Psoas muscle (tissue), 8 donors: ENCODE measurements at regions of chr1 and their contacts with region 1.

Region 1: GRCh38 chr1:160997323-160998038 is 23.5 kb downstream of the F11R start:
- DNase-seq: peak; percentile 33 to 67
- ATAC-seq: peak in 3 of 4 donors; percentile 60 to 76 (median 65)
- H3K4me3 ChIP-seq: no peak overlapping the region
- H3K27ac ChIP-seq: no peak overlapping the region
- H3K4me1 ChIP-seq: no peaks in the 10 kb centered on the region
- H3K27me3 ChIP-seq: no peaks in the 10 kb centered on the region
- CTCF ChIP-seq: peak; percentile 52

Region 2: DNA sequence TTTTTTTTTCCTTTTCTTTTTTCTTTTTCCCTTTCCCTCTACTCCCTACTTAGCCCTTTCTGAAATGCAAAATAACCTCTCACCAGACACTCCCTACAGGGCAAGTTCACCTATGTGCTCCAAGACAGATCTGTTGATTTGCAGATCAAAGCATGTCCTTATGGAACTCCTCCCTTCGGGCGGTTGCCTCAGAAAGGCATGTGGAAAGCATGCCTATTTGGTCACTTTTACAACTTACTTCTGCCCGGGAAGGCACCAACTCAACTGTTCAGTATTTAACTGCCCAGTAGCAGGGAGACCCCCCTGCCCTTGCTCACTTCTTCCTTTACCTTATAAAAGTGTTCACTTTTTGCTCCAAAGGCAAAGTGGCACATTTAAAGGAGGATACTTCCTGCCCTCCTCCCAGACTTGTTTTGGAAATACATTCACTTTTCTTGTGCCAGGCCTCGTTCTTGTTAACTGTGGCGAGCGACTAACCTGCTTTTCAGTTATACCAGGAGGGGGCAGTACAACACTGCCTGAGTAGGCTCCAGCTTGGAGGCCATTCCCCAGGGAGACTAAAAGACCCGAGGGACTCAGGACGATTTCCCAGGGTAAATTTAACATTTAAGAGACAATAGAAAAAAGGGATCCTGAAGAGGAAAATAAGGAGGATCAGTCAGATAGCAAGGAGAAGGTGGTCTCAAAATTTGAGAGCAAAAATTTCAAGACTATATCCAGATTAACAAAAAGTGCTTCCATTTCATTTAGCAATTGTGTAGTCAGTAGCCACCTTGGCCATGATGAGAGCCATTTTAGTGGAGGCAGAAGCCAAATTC is 270.8 kb before region 1 on chr1:
- intact Hi-C with region 1: loop called in 1 of 2 experiments (anchors 5 kb)
- DNase-seq: no peak
- ATAC-seq: no peak
- H3K4me3 ChIP-seq: no peak overlapping the region
- H3K27ac ChIP-seq: no peak overlapping the region
- H3K4me1 ChIP-seq: no peaks in the 10 kb centered on the region
- H3K27me3 ChIP-seq: no peaks in the 10 kb centered on the region
- CTCF ChIP-seq: peak; percentile 54

Region 3: GRCh38 chr1:161013488-161014230 is 16.2 kb after region 1 on chr1:
- intact Hi-C with region 1: no loop called
- DNase-seq: peak; percentile 71 to 80
- ATAC-seq: peak; percentile 71 to 90 (median 86)
- H3K4me3 ChIP-seq: peak overlapping the region; percentile 36
- H3K27ac ChIP-seq: peak overlapping the region; percentile 72
- H3K4me1 ChIP-seq: peaks cover 3% of the 10 kb centered on the region
- H3K27me3 ChIP-seq: peaks cover 0 to 9% (median 0%) of the 10 kb centered on the region in 3 donors
- CTCF ChIP-seq: no peak

Region 4: GRCh38 chr1:161139765-161140164 is 142.3 kb after region 1 on chr1:
- intact Hi-C with region 1: loop called in 1 of 2 experiments (anchors 5 kb)
- DNase-seq: no peak
- ATAC-seq: peak in 2 of 4 donors; percentile 47 to 63
- H3K4me3 ChIP-seq: no peak overlapping the region
- H3K27ac ChIP-seq: no peak overlapping the region
- H3K4me1 ChIP-seq: peaks cover 13% of the 10 kb centered on the region
- H3K27me3 ChIP-seq: no peaks in the 10 kb centered on the region
- CTCF ChIP-seq: peak; percentile 56